GM13977 (cell line): ENCODE measurements at regions of chr1 and their contacts with region 1.

Region 1: GRCh38 chr1:23530747-23531561 is at the start of gene E2F2:
- DNase-seq: peak; percentile 95
- CTCF ChIP-seq: peak; percentile 28

Region 2: GRCh38 chr1:23273450-23274133 is 257.4 kb before region 1 on chr1:
- in situ Hi-C with region 1: no loop called
- DNase-seq: no peak
- CTCF ChIP-seq: no peak

Region 3: DNA sequence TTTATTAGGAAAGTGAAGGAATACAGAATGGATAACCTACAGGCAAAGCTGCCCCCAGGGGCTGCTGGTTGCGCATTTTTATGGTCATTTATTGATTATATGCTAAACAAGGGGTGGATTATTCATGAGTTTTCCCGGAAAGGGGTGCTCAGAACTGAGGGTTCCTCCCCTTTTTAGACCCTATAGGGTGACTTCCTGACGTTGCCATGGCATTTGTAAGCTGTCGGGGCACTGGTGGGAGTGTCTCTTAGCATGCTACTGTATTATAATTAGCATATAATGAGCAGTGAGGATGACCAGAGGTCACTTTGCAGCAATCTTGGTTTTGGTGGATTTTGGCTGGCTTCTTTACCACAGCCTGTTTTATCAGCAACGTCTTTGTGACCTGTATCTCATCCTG is 41.1 kb before region 1 on chr1:
- in situ Hi-C with region 1: loop called (anchors 5 kb)
- DNase-seq: no peak
- CTCF ChIP-seq: no peak